ENCODE measurements at regions of chr4 and their contacts with region 1.

Region 1: DNA sequence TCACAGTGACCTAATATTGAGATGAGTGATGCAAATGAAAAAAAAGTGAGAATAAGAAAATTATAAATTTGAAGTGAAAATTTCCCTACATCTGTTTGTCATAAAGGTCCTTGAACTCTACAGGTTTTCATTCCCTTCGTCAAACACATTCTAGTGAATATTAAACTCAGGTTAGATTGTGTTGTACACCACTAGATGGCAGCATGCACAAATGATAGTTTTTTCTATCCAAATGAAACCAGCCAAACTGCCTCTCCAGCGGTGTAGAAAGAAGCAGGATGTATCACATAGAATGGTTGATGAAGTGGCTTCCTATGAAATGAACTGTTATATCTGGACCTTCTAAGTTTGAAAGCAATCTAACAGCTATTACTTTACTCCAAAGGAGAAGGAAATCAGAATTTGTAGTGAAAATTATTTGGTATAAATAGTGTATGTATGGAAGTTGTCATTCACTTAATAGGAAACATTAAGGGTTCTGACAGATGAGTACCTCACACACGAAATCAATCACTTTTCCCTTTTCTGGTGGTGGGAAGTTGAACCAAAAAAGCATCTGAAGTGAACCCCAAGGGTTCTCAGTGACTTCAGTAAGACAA is 382.7 kb downstream of the UNC5C start:
- DNase-seq: peak; percentile 41
- H3K4me3 Mint-ChIP-seq: no peak overlapping the region
- H3K27ac Mint-ChIP-seq: no peak overlapping the region
- H3K4me1 Mint-ChIP-seq: no peaks in the 10 kb centered on the region
- H3K27me3 Mint-ChIP-seq: no peaks in the 10 kb centered on the region

Region 2: DNA sequence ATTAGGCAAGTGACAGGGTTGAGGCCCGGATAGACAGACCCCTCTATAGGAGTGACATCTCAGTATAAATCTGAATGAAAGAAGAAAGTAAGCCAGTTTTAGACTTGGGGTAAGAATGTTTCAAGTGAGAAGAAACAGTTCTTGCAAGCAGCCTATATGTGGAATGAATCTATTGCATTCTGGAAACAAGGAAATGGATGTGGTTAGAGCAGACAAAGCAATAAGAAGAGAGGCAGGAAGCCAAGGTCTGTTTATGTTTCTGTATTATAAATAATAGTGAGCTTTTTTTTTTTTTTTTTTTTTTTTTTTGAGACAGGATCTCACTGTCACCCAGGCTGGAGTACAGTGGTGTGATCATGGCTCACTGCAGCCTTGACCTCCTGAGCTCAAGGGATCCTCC is 127.0 kb after region 1 on chr4:
- CTCF ChIA-PET with region 1: no interaction called
- intact Hi-C with region 1: loop called (anchors 10 kb)
- DNase-seq: no peak
- H3K4me3 Mint-ChIP-seq: no peak overlapping the region
- H3K27ac Mint-ChIP-seq: no peak overlapping the region
- H3K4me1 Mint-ChIP-seq: peaks cover 29% of the 10 kb centered on the region
- H3K27me3 Mint-ChIP-seq: no peaks in the 10 kb centered on the region

Region 3: DNA sequence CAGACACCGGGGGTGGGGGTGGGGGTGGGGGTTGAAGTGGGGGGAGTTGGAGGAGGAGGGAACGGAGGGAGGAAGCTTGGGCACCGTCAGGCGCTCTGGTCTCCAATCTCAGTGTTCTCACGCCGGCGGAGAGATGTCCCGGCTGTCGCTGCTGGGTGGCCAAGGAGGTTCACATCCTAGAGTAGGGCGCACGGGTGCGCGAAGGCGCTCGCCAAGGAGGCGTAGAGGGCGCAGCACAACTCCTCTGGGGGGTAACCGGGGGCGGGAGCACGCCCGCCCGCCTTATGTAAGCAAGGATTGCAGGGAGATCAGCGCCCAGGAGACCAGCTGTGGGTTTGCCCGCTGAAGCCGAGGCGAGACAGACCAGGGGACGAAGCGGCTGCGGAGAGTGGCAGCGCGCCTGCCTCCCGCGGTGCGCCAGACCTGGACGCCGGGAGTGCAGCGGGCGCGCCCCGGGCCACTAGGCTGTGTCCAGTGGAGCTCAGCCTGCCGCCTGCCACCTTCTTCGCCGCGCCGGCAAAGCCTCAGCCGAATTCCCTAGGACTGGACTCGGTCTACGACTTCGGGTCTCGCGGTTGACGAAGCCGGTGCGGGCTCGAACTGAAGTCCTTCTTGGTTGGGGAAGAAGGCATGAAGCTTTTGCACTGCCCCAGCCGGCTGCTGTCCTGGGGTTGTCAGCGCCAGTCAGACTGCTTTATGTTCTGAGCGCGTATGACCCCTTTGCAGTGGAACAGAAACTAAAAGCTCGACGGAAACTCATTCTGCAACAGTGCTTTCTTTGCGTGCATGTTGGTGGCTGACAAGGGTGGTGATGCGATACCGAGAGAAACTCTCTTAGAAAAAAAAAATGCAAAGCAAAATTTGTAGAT is 383.5 kb after region 1 on chr4:
- CTCF ChIA-PET with region 1: no interaction called
- intact Hi-C with region 1: loop called (anchors 10 kb)
- DNase-seq: peak; percentile 48
- H3K4me3 Mint-ChIP-seq: peak overlapping the region; percentile 68
- H3K27ac Mint-ChIP-seq: no peak overlapping the region
- H3K4me1 Mint-ChIP-seq: peaks cover 15% of the 10 kb centered on the region
- H3K27me3 Mint-ChIP-seq: peaks cover 44% of the 10 kb centered on the region

Region 4: DNA sequence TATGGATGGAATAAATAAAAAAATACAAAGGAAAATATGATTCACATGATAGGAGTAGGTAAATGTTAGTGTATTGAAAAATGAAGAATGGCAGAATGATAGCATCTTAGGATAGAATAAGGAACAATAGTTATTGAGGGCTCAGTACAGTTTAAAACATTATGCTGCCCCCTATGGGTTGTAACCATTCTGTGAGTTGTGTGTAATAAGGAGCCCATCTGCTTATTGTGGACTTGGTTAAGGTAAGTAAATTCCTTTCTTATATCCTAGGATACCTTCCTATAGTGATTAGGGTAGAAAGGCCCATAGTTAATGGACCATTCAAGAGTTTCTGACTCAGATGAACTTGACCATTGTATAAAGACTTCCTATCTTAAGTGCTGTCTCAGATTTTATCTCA is 869.7 kb after region 1 on chr4:
- CTCF ChIA-PET with region 1: no interaction called
- intact Hi-C with region 1: loop called (anchors 2 kb)
- DNase-seq: no peak
- H3K4me3 Mint-ChIP-seq: no peak overlapping the region
- H3K27ac Mint-ChIP-seq: no peak overlapping the region
- H3K4me1 Mint-ChIP-seq: no peaks in the 10 kb centered on the region
- H3K27me3 Mint-ChIP-seq: peaks cover 2% of the 10 kb centered on the region

Region 5: DNA sequence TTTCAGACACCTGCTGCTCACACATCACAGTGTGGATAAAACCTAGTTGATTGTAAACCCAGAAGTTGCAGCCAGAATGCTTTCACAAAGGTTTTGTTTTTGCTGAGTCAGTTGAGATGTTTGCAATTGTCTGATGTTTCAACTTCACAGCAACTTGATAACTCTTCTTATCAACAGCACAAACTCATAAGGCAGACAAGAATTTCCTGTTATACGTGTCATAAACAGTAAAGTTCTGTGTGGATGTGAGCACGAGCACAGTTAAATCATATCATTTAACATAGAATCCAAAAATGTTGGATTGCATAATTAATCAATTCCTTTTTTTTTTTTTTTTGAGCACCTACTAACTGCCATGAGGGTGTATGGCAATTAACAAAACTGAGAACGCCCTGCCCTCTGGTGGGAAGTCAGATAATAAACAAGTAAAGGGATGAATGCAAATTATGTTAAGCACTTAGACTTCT is 1186.1 kb after region 1 on chr4:
- CTCF ChIA-PET with region 1: no interaction called
- intact Hi-C with region 1: loop called (anchors 1 kb)
- DNase-seq: peak; percentile 28
- H3K4me3 Mint-ChIP-seq: no peak overlapping the region
- H3K27ac Mint-ChIP-seq: no peak overlapping the region
- H3K4me1 Mint-ChIP-seq: no peaks in the 10 kb centered on the region
- H3K27me3 Mint-ChIP-seq: no peaks in the 10 kb centered on the region